SK-N-SH (cell line): ENCODE measurements at regions of chr16 and their contacts with region 1.

Region 1: GRCh38 chr16:68040507-68041288 is 17.6 kb downstream of the DUS2 start:
- DNase-seq: peak; percentile 82
- H3K4me3 ChIP-seq: no peak overlapping the region
- H3K27ac ChIP-seq: no peak overlapping the region
- H3K4me1 ChIP-seq: no peaks in the 10 kb centered on the region
- H3K27me3 ChIP-seq: no peaks in the 10 kb centered on the region
- CTCF ChIP-seq: peak; percentile 91
- EP300 ChIP-seq: no peak
- RAD21 ChIP-seq: peak; percentile 84

Region 2: GRCh38 chr16:67883872-67884261 is 156.8 kb before region 1 on chr16:
- CTCF ChIA-PET with region 1: interaction called, 11 read pairs
- POLR2A ChIA-PET with region 1: no interaction called
- DNase-seq: peak; percentile 90
- H3K4me3 ChIP-seq: no peak overlapping the region
- H3K27ac ChIP-seq: no peak overlapping the region
- H3K4me1 ChIP-seq: peaks cover 7 to 13% of the 10 kb centered on the region in 2 experiments; a peak in 2 of 4 replicates
- H3K27me3 ChIP-seq: no peaks in the 10 kb centered on the region
- CTCF ChIP-seq: peak; percentile 91
- EP300 ChIP-seq: no peak
- RAD21 ChIP-seq: peak; percentile 71

Region 3: DNA sequence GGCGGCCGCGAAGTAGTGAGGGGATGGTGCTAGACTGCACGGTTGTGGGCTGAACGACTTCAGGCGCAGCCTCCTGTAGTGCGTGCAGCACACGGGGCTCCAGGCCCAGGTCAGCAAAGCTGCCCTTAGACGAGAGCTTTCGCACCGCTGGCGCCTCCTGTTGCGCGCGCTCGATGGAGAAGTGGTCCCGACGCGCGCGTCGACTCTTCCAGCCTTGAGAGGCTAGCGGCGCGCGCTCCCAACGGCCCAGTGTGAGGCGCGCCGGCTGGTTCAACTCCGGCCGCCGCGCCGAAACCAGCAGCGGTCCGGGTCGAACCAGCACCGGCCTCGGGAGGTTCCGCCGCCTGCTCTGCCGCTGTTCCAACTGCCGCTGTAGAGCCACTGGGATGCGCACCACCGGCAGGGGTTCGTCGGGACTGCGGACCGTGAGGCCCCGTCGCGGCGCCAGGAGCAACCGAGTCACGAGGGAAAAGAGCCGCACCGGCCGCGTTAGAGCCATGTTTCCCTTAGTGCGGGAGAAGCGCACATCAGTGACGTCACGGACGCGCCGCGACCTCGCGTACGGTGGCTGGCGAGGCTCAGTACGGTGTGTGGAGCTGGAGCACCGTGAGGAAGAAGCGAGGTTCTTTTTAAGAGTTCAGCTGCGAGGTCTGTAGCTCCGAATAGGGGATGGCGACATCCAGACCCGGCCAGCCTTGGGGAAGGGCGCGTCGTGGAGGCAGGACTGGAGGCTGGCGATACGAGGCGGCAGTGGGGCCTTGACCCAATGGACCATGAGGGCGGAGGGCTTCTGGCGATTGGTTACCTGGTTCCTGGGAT is 17.8 kb before region 1 on chr16 and contains the starts of genes DDX28 and DUS2:
- CTCF ChIA-PET with region 1: interaction called, 29 read pairs
- POLR2A ChIA-PET with region 1: no interaction called
- DNase-seq: peak; percentile 91
- H3K4me3 ChIP-seq: peak within 1 kb of the TSS; percentile 80 to 98
- H3K27ac ChIP-seq: peak within 1 kb of the TSS; percentile 57 to 78
- H3K4me1 ChIP-seq: peaks cover 7 to 12% of the 10 kb centered on the region in 2 experiments; a peak in 2 of 4 replicates
- H3K27me3 ChIP-seq: no peaks in the 10 kb centered on the region
- CTCF ChIP-seq: 0 out of 2 replicates have a peak, but pooled peaks have one; percentile 7
- EP300 ChIP-seq: no peak
- RAD21 ChIP-seq: no peak
- polyA plus RNA-seq, gene DDX28: 10.8 and 12.0 TPM in 2 replicates
- polyA plus RNA-seq, gene DUS2: 16.1 and 16.5 TPM in 2 replicates

Region 4: DNA sequence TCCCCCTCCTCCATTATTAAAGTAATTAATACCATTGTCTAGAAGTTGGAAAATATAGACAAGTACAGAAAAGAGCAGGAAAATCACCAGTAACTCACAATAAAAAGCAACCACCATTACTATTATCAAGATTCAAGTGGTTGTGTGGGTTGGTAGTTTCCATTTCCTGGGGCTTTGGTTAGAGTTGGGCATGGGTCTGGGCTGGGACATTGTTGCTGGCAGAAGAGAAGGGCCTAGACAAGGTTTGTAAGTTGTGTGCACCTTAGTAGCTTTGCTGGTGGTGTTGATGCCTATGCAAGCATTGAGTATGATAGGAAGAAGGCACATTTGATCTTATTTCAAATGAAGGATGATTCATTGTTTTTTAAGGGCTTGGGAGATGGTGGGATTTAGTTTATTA is 19.1 kb after region 1 on chr16:
- CTCF ChIA-PET with region 1: interaction called, 14 read pairs
- POLR2A ChIA-PET with region 1: no interaction called
- DNase-seq: no peak
- H3K4me3 ChIP-seq: no peak overlapping the region
- H3K27ac ChIP-seq: no peak overlapping the region
- H3K4me1 ChIP-seq: peaks cover 0 to 8% of the 10 kb centered on the region in 2 experiments; a peak in 2 of 4 replicates
- H3K27me3 ChIP-seq: no peaks in the 10 kb centered on the region
- CTCF ChIP-seq: no peak
- EP300 ChIP-seq: no peak
- RAD21 ChIP-seq: no peak

Region 5: GRCh38 chr16:68146585-68146984 is 105.9 kb after region 1 on chr16:
- CTCF ChIA-PET with region 1: no interaction called
- POLR2A ChIA-PET with region 1: no interaction called
- DNase-seq: peak; percentile 50
- H3K4me3 ChIP-seq: no peak overlapping the region
- H3K27ac ChIP-seq: peak overlapping the region in 1 of 2 experiments; percentile 46; a peak in 1 of 4 replicates
- H3K4me1 ChIP-seq: peaks cover under 1 to 6% of the 10 kb centered on the region in 2 experiments; a peak in 3 of 4 replicates
- H3K27me3 ChIP-seq: no peaks in the 10 kb centered on the region
- CTCF ChIP-seq: no peak
- EP300 ChIP-seq: peak in 1 of 2 experiments; percentile 33; a peak in 1 of 4 replicates
- RAD21 ChIP-seq: no peak

Region 6: GRCh38 chr16:68229431-68230198 is 188.9 kb after region 1 on chr16:
- CTCF ChIA-PET with region 1: interaction called, 10 read pairs
- POLR2A ChIA-PET with region 1: no interaction called
- DNase-seq: peak; percentile 69
- H3K4me3 ChIP-seq: peak overlapping the region in 1 of 2 experiments; percentile 27; a peak in 1 of 4 replicates
- H3K27ac ChIP-seq: no peak overlapping the region
- H3K4me1 ChIP-seq: peaks cover 0 to 25% of the 10 kb centered on the region in 2 experiments; a peak in 2 of 4 replicates
- H3K27me3 ChIP-seq: no peaks in the 10 kb centered on the region
- CTCF ChIP-seq: peak; percentile 91
- EP300 ChIP-seq: no peak
- RAD21 ChIP-seq: peak; percentile 94

Region 7: GRCh38 chr16:68520649-68521086 is 480.0 kb after region 1 on chr16:
- CTCF ChIA-PET with region 1: no interaction called
- POLR2A ChIA-PET with region 1: no interaction called
- DNase-seq: peak; percentile 94
- H3K4me3 ChIP-seq: peak overlapping the region; percentile 30 to 56
- H3K27ac ChIP-seq: no peak overlapping the region
- H3K4me1 ChIP-seq: peaks cover 0 to 4% of the 10 kb centered on the region in 2 experiments; a peak in 1 of 4 replicates
- H3K27me3 ChIP-seq: no peaks in the 10 kb centered on the region
- CTCF ChIP-seq: peak; percentile 89
- EP300 ChIP-seq: 0 out of 4 replicates have a peak, but pooled peaks of 1 of the 2 experiments have one; percentile 11
- RAD21 ChIP-seq: peak; percentile 66